Caco-2 (cell line): ENCODE measurements at regions of chr7 and their contacts with region 1.

Region 1: GRCh38 chr7:117588345-117588794 is 108.5 kb downstream of the CFTR start:
- DNase-seq: peak; percentile 75 to 84
- H3K4me3 ChIP-seq: no peak overlapping the region
- H3K4me3 Mint-ChIP-seq: peak overlapping the region; percentile 57
- H3K27ac Mint-ChIP-seq: peak overlapping the region; percentile 37
- H3K4me1 ChIP-seq: peaks cover 69% of the 10 kb centered on the region
- H3K4me1 Mint-ChIP-seq: peaks cover 51% of the 10 kb centered on the region
- H3K27me3 ChIP-seq: no peaks in the 10 kb centered on the region
- H3K27me3 Mint-ChIP-seq: no peaks in the 10 kb centered on the region
- CTCF ChIP-seq: no peak

Region 2: DNA sequence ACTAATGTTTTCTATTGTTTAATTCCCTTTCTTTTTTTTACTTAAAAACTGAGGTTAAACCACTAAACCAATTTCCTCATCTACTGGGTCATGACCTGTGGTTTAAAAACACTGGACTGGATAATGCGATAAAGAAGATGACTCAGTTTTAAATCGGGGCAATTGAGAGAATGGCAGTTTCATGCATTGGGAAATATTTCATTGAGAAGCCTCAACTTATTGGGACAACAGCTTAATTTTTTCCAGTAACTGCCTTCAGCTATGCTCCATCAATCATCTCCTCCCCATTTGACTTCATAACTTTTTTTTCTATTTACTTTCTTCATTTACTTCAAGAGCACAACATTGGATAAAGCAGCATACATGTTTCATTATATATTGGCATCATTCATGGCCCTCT is 978.2 kb before region 1 on chr7:
- CTCF ChIA-PET with region 1: no interaction called
- POLR2A ChIA-PET with region 1: no interaction called
- intact Hi-C with region 1: no loop called
- DNase-seq: no peak
- H3K4me3 ChIP-seq: no peak overlapping the region
- H3K4me3 Mint-ChIP-seq: no peak overlapping the region
- H3K27ac Mint-ChIP-seq: no peak overlapping the region
- H3K4me1 ChIP-seq: no peaks in the 10 kb centered on the region
- H3K4me1 Mint-ChIP-seq: peaks cover 16% of the 10 kb centered on the region
- H3K27me3 ChIP-seq: no peaks in the 10 kb centered on the region
- H3K27me3 Mint-ChIP-seq: no peaks in the 10 kb centered on the region
- CTCF ChIP-seq: no peak

Region 3: GRCh38 chr7:117572856-117573620 is 15.3 kb before region 1 on chr7:
- CTCF ChIA-PET with region 1: interaction called, 9 read pairs
- POLR2A ChIA-PET with region 1: no interaction called
- intact Hi-C with region 1: loop called (anchors 1 kb)
- DNase-seq: peak in 1 of 2 experiments; percentile 39
- H3K4me3 ChIP-seq: no peak overlapping the region
- H3K4me3 Mint-ChIP-seq: peak overlapping the region; percentile 18
- H3K27ac Mint-ChIP-seq: peak overlapping the region; percentile 65
- H3K4me1 ChIP-seq: peaks cover 63% of the 10 kb centered on the region
- H3K4me1 Mint-ChIP-seq: peaks cover 47% of the 10 kb centered on the region
- H3K27me3 ChIP-seq: no peaks in the 10 kb centered on the region
- H3K27me3 Mint-ChIP-seq: no peaks in the 10 kb centered on the region
- CTCF ChIP-seq: no peak

Region 4: GRCh38 chr7:117630907-117631564 is 42.7 kb after region 1 on chr7:
- CTCF ChIA-PET with region 1: no interaction called
- POLR2A ChIA-PET with region 1: no interaction called
- intact Hi-C with region 1: loop called (anchors 1 kb)
- DNase-seq: no peak
- H3K4me3 ChIP-seq: no peak overlapping the region
- H3K4me3 Mint-ChIP-seq: peak overlapping the region; percentile 10
- H3K27ac Mint-ChIP-seq: peak overlapping the region; percentile 84
- H3K4me1 ChIP-seq: peaks cover 45% of the 10 kb centered on the region
- H3K4me1 Mint-ChIP-seq: peaks cover 43% of the 10 kb centered on the region
- H3K27me3 ChIP-seq: no peaks in the 10 kb centered on the region
- H3K27me3 Mint-ChIP-seq: no peaks in the 10 kb centered on the region
- CTCF ChIP-seq: no peak

Region 5: GRCh38 chr7:117666016-117666415 is 77.6 kb after region 1 on chr7:
- CTCF ChIA-PET with region 1: interaction called, 3 read pairs
- POLR2A ChIA-PET with region 1: no interaction called
- intact Hi-C with region 1: loop called (anchors 1 kb)
- DNase-seq: peak; percentile 65 to 66
- H3K4me3 ChIP-seq: no peak overlapping the region
- H3K4me3 Mint-ChIP-seq: peak overlapping the region; percentile 24
- H3K27ac Mint-ChIP-seq: peak overlapping the region; percentile 95
- H3K4me1 ChIP-seq: peaks cover 59% of the 10 kb centered on the region
- H3K4me1 Mint-ChIP-seq: peaks cover 59% of the 10 kb centered on the region
- H3K27me3 ChIP-seq: no peaks in the 10 kb centered on the region
- H3K27me3 Mint-ChIP-seq: no peaks in the 10 kb centered on the region
- CTCF ChIP-seq: no peak

Region 6: DNA sequence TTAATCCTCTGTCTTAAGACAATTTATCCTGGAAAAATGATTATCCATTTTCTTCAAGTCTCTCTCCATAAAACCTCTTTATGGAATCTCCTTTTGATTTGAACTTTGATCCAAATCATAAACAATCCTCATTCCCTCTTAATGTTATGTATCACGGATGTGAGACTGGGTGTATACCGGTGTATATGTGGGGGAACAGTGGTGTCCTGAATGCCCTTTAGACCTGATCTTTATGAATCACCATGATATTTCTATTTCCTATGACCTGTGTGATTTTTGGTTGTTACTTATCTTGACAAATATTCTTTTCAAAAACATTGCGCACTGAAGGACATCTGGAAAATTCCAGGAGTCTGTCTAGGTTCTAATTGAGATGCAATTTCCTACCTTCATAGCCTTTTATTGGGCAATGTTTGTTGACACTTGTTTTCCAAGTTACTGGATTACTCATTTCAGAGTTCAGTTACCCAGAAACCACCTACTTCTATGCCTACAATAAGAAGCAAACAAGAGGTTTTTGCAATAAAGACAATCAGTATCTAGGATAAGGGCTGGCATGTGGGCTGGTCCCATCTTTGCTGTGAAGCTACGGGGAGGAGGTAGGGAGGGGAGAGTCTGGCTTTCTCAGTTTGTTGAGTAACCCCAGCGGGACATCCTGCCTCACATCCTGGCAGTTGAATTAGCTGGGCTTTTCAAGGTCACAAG is 94.5 kb after region 1 on chr7:
- CTCF ChIA-PET with region 1: no interaction called
- POLR2A ChIA-PET with region 1: no interaction called
- intact Hi-C with region 1: loop called (anchors 2 kb)
- DNase-seq: peak; percentile 85 to 89
- H3K4me3 ChIP-seq: no peak overlapping the region
- H3K4me3 Mint-ChIP-seq: no peak overlapping the region
- H3K27ac Mint-ChIP-seq: peak overlapping the region; percentile 67
- H3K4me1 ChIP-seq: peaks cover 54% of the 10 kb centered on the region
- H3K4me1 Mint-ChIP-seq: peaks cover 17% of the 10 kb centered on the region
- H3K27me3 ChIP-seq: no peaks in the 10 kb centered on the region
- H3K27me3 Mint-ChIP-seq: no peaks in the 10 kb centered on the region
- CTCF ChIP-seq: no peak

Region 7: DNA sequence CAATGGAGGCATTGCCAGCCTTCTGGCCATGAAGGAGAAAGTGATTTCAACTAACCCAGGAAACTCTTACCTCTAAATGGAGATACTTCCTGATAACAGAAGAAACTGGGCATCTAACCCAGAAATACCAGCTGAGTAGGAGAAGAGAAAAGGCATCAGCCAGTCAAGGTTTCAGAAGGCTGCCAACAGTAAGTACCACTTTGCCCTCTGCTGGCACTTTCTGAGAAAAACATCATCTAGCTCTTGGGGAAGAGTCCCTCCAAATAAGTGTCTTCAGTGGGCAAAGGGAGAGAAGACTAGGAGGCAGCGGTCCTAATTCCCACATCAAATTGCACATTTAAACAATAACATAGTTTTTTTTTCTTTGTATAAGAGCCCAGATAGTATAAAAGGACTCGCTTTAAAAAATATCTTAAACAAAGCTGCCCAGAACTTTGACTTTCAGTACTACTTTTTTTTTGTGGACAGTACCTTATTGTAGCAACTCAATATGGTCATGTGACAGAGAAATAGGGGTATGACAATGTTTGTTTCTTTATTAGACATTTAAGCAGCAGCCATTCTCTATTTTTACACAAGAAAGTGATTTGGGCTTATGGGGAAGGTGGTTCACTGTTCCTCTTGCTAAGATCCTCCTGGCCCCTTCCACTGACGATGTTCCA is 127.5 kb after region 1 on chr7:
- CTCF ChIA-PET with region 1: interaction called, 8 read pairs
- POLR2A ChIA-PET with region 1: no interaction called
- intact Hi-C with region 1: loop called (anchors 2 kb)
- DNase-seq: peak; percentile 57 to 75
- H3K4me3 ChIP-seq: no peak overlapping the region
- H3K4me3 Mint-ChIP-seq: no peak overlapping the region
- H3K27ac Mint-ChIP-seq: no peak overlapping the region
- H3K4me1 ChIP-seq: peaks cover 14% of the 10 kb centered on the region
- H3K4me1 Mint-ChIP-seq: peaks cover 31% of the 10 kb centered on the region
- H3K27me3 ChIP-seq: no peaks in the 10 kb centered on the region
- H3K27me3 Mint-ChIP-seq: no peaks in the 10 kb centered on the region
- CTCF ChIP-seq: peak; percentile 69 to 71